CD4-positive, alpha-beta memory T cell (primary cell): ENCODE measurements at regions of chr17 and their contacts with region 1.

Region 1: GRCh38 chr17:21043286-21044232 is 748 bp upstream of the USP22 start:
- DNase-seq: peak; percentile 95 to 99 (median 97)
- H3K4me3 ChIP-seq: peak overlapping the region; percentile 3 to 62
- H3K4me3 Mint-ChIP-seq: peak overlapping the region; percentile 80 to 88 (median 85)
- H3K27ac ChIP-seq: peak overlapping the region; percentile 97
- H3K27ac Mint-ChIP-seq: peak overlapping the region; percentile 93 to 98 (median 95)
- H3K4me1 ChIP-seq: peaks cover 28% of the 10 kb centered on the region
- H3K4me1 Mint-ChIP-seq: peaks cover 18 to 48% (median 28%) of the 10 kb centered on the region in 4 donors
- H3K27me3 ChIP-seq: no peaks in the 10 kb centered on the region
- H3K27me3 Mint-ChIP-seq: no peaks in the 10 kb centered on the region

Region 2: GRCh38 chr17:21007646-21008045 is 35.9 kb before region 1 on chr17:
- CTCF ChIA-PET with region 1: no interaction called
- POLR2A ChIA-PET with region 1: interaction called, 10 read pairs
- intact Hi-C with region 1: no loop called
- DNase-seq: no peak
- H3K4me3 ChIP-seq: no peak overlapping the region
- H3K4me3 Mint-ChIP-seq: no peak overlapping the region
- H3K27ac ChIP-seq: no peak overlapping the region
- H3K27ac Mint-ChIP-seq: peak overlapping the region in 5 of 7 donors; percentile 6 to 42 (median 36)
- H3K4me1 ChIP-seq: no peaks in the 10 kb centered on the region
- H3K4me1 Mint-ChIP-seq: peaks cover 0 to 5% (median 1%) of the 10 kb centered on the region in 4 donors
- H3K27me3 ChIP-seq: no peaks in the 10 kb centered on the region
- H3K27me3 Mint-ChIP-seq: no peaks in the 10 kb centered on the region

Region 3: DNA sequence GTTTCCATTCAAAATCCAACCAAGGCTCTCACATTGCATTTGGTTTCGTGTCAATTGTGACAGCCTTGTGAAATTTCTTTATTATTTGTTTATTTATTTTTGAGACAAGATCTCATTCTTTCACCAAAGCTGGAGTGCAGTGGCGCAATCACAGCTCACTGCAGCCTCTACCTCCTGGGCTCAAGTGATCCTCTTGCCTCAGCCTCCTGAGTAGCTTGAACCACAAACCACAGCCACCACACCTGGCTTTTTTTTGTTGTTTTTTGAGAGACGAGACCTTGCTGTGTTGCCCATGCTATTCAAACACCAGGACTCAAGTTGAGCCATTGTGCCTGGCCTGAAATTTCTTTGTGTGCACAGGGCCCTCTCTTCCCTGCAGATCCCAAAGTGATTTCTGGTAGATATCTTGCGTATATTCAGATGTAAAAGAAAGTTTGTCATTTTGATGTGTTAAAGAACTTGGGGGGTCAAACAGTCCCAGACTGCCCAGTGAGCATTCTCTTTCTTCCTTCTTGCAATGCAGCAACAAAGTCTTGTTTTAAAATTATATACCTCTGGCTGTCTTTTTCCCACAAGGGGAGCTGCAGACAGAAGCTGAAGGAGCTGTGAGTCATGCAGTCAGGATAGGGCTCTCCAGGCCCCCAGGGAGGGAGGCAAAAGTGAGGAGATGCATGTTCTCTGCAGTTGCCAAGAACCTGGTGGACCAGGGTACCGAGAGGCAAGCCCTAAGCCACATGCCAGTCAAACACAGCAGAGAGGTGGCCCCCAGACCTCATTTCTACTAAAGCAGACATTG is 14.7 kb after region 1 on chr17:
- CTCF ChIA-PET with region 1: interaction called, 16 read pairs
- POLR2A ChIA-PET with region 1: interaction called, 15 read pairs
- intact Hi-C with region 1: no loop called
- DNase-seq: no peak
- H3K4me3 ChIP-seq: no peak overlapping the region
- H3K4me3 Mint-ChIP-seq: no peak overlapping the region
- H3K27ac ChIP-seq: no peak overlapping the region
- H3K27ac Mint-ChIP-seq: no peak overlapping the region
- H3K4me1 ChIP-seq: no peaks in the 10 kb centered on the region
- H3K4me1 Mint-ChIP-seq: no peaks in the 10 kb centered on the region
- H3K27me3 ChIP-seq: no peaks in the 10 kb centered on the region
- H3K27me3 Mint-ChIP-seq: peaks cover 3 to 14% of the 10 kb centered on the region in 2 donors

Region 4: DNA sequence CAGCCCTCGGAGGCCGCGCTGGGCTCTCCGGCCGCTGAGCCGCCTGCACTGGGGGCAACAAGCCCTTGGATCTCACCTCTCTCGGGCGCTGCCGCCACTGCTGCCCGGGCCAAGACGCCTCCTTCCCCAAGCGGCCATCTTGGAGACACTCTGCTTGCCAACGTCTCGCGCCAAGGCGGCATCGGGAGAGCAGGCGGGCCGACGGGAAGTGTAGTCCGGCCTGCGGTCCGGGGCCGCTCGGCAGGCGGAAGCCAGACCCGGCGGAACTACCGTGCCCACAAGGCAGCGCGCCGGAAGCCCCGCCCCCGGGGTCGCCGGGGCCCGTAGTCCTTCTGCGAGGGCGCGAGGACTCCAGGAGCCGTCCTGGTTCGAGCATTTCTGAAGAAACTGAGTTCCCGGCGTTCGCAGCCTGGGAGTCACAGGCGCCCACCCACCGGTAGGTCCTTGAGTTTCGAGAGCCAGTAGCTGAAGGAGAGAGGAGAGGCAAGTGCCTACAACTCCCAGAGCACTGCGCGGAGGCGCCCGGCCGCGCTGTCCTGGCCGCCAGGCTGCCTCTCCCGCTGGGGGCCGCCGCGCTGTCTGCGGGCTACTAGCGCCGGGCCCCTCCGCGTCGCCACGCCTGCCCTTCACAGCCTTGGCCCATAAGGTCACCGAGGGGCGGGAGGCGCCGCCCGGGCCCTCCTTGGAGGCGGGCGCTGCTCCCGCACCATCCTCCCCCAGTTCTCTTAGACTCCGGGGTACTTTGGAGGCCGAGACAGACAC is 170.6 kb after region 1 on chr17 and contains the start of gene TMEM11:
- CTCF ChIA-PET with region 1: no interaction called
- POLR2A ChIA-PET with region 1: interaction called, 18 read pairs
- intact Hi-C with region 1: loop called (anchors 1 kb)
- DNase-seq: peak; percentile 94 to 96 (median 95)
- H3K4me3 ChIP-seq: peak within 1 kb of the TSS; percentile 64 to 94
- H3K4me3 Mint-ChIP-seq: peak within 1 kb of the TSS; percentile 89 to 97 (median 92)
- H3K27ac ChIP-seq: peak within 1 kb of the TSS; percentile 92
- H3K27ac Mint-ChIP-seq: peak within 1 kb of the TSS; percentile 82 to 96 (median 93)
- H3K4me1 ChIP-seq: peaks cover 39% of the 10 kb centered on the region
- H3K4me1 Mint-ChIP-seq: peaks cover 31 to 64% (median 47%) of the 10 kb centered on the region in 4 donors
- H3K27me3 ChIP-seq: no peaks in the 10 kb centered on the region
- H3K27me3 Mint-ChIP-seq: no peaks in the 10 kb centered on the region
- total RNA-seq, gene TMEM11: 18.6 to 21.7 TPM

Region 5: DNA sequence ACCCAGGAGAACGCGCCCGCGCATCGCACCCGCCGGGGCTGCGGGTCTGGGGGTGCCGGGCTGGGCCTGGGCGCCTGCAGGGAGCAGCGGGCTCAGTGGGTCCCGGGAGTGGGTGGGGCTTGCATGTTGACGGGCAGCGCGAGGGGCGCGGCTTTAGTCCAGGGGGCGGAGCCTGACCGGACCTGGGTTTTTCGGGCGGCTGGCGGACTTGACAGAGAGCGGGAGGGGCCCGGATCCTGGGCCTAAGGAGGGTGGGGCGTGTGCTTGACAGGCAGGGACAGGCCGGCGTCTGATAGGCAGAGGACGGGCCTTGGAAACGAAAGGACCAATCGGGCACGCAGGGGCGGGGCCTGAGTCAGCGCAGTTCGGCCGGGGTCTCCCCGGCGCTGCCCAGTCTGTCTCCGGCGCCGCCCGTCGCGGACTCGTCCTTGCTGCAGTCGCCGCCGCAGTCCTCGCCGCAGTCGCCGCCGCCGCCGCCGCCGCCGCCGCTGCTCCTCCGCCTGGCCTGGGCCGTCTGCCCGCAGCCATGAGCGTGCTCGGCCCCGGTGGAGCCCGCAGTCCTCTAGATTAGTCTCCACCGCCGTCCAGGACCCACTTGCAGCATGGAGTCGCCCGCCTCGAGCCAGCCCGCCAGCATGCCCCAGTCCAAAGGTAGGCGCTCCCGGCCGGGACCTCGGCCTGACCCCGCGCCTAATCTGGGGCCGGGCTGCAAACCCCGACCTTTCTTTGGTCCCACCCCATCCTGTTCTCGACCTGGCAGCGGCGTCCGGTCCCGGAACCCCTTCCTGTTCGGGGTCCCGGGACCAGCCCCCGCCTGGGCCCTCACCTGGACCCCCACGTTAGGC is 241.0 kb after region 1 on chr17 and contains the start of gene MAP2K3:
- CTCF ChIA-PET with region 1: interaction called, 3 read pairs
- POLR2A ChIA-PET with region 1: interaction called, 24 read pairs
- intact Hi-C with region 1: loop called (anchors 1 kb)
- DNase-seq: peak; percentile 91 to 96 (median 92)
- H3K4me3 ChIP-seq: peak within 1 kb of the TSS; percentile 76 to 87
- H3K4me3 Mint-ChIP-seq: peak within 1 kb of the TSS; percentile 95 to 99 (median 96)
- H3K27ac ChIP-seq: peak within 1 kb of the TSS; percentile 94
- H3K27ac Mint-ChIP-seq: peak within 1 kb of the TSS; percentile 97 to 99 (median 98)
- H3K4me1 ChIP-seq: peaks cover 56% of the 10 kb centered on the region
- H3K4me1 Mint-ChIP-seq: peaks cover 34 to 77% (median 51%) of the 10 kb centered on the region in 4 donors
- H3K27me3 ChIP-seq: no peaks in the 10 kb centered on the region
- H3K27me3 Mint-ChIP-seq: no peaks in the 10 kb centered on the region
- total RNA-seq, gene MAP2K3: 52.6 to 63.2 TPM